ENCODE measurements at regions of chr17 and their contacts with region 1.

Region 1: GRCh38 chr17:75779231-75779986 is 5.2 kb upstream of the UNK start:
- DNase-seq: peak; percentile 100
- ATAC-seq: peak; percentile 75
- H3K4me3 ChIP-seq: peak overlapping the region; percentile 74 to 84
- H3K27ac ChIP-seq: peak overlapping the region; percentile 97
- H3K4me1 ChIP-seq: peaks cover 38 to 79% of the 10 kb centered on the region in 2 experiments
- H3K27me3 ChIP-seq: no peaks in the 10 kb centered on the region
- CTCF ChIP-seq: no peak; a peak in 1 of 6 replicates
- POLR2A ChIP-seq: peak; percentile 100
- RAD21 ChIP-seq: no peak

Region 2: GRCh38 chr17:75535119-75535537 is 244.3 kb before region 1 on chr17:
- CTCF ChIA-PET with region 1: no interaction called
- POLR2A ChIA-PET with region 1: no interaction called
- RAD21 ChIA-PET with region 1: no interaction called
- intact Hi-C with region 1: no loop called
- DNase-seq: no peak
- ATAC-seq: no peak
- H3K4me3 ChIP-seq: no peak overlapping the region
- H3K27ac ChIP-seq: peak overlapping the region; percentile 4; the same call in 1 of the 2 replicates
- H3K4me1 ChIP-seq: peaks cover 32 to 56% of the 10 kb centered on the region in 2 experiments
- H3K27me3 ChIP-seq: no peaks in the 10 kb centered on the region
- CTCF ChIP-seq: no peak
- POLR2A ChIP-seq: no peak
- RAD21 ChIP-seq: no peak

Region 3: GRCh38 chr17:75645889-75646637 is 133.3 kb before region 1 on chr17:
- CTCF ChIA-PET with region 1: no interaction called
- POLR2A ChIA-PET with region 1: interaction called, 13 read pairs
- RAD21 ChIA-PET with region 1: no interaction called
- intact Hi-C with region 1: no loop called
- DNase-seq: peak; percentile 64
- ATAC-seq: peak; percentile 89
- H3K4me3 ChIP-seq: peak overlapping the region; percentile 8 to 55
- H3K27ac ChIP-seq: peak overlapping the region; percentile 77
- H3K4me1 ChIP-seq: peaks cover 34 to 60% of the 10 kb centered on the region in 2 experiments
- H3K27me3 ChIP-seq: no peaks in the 10 kb centered on the region
- CTCF ChIP-seq: no peak
- POLR2A ChIP-seq: no peak
- RAD21 ChIP-seq: no peak

Region 4: DNA sequence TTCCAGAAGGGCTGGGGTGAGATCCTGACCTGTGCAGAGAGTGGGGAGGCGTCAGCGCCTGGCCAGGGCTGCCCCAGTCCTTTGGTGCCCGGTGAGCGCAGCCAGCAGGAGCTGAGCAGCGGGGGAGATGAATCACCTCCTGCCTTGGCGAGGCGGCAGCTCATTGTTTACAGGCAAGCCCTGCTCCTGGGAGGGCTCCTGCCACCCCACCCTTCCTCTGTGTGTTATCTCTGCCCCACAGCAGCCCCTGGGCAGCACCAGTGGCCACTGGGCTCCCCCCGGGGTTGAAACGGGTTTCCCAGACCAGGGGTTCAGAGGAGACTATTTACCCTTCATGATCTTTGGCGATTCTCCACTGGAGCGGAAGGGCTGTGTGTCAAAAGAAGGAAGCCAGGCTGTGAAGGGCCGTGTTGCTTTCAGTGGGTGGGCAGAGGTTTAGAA is 72.3 kb before region 1 on chr17:
- CTCF ChIA-PET with region 1: interaction called, 3 read pairs
- POLR2A ChIA-PET with region 1: interaction called, 14 read pairs
- RAD21 ChIA-PET with region 1: no interaction called
- intact Hi-C with region 1: no loop called
- DNase-seq: peak; percentile 94
- ATAC-seq: peak; percentile 95
- H3K4me3 ChIP-seq: peak overlapping the region in 1 of 2 experiments; percentile 43; a peak in 2 of 4 replicates
- H3K27ac ChIP-seq: peak overlapping the region; percentile 85
- H3K4me1 ChIP-seq: peaks cover 55 to 86% of the 10 kb centered on the region in 2 experiments
- H3K27me3 ChIP-seq: no peaks in the 10 kb centered on the region
- CTCF ChIP-seq: no peak
- POLR2A ChIP-seq: no peak
- RAD21 ChIP-seq: no peak

Region 5: GRCh38 chr17:75795820-75796607 is 16.6 kb after region 1 on chr17:
- CTCF ChIA-PET with region 1: interaction called, 6 read pairs
- POLR2A ChIA-PET with region 1: interaction called, 23 read pairs
- RAD21 ChIA-PET with region 1: no interaction called
- intact Hi-C with region 1: no loop called
- DNase-seq: no peak
- ATAC-seq: no peak
- H3K4me3 ChIP-seq: no peak overlapping the region
- H3K27ac ChIP-seq: no peak overlapping the region
- H3K4me1 ChIP-seq: no peaks in the 10 kb centered on the region
- H3K27me3 ChIP-seq: no peaks in the 10 kb centered on the region
- CTCF ChIP-seq: no peak
- POLR2A ChIP-seq: no peak
- RAD21 ChIP-seq: no peak

Region 6: GRCh38 chr17:75827252-75828115 is 48.1 kb after region 1 on chr17:
- CTCF ChIA-PET with region 1: interaction called, 6 read pairs
- POLR2A ChIA-PET with region 1: interaction called, 32 read pairs
- RAD21 ChIA-PET with region 1: interaction called in 1 of 2 experiments, 3 read pairs
- intact Hi-C with region 1: no loop called
- DNase-seq: no peak
- ATAC-seq: peak; percentile 84
- H3K4me3 ChIP-seq: no peak overlapping the region
- H3K27ac ChIP-seq: peak overlapping the region; percentile 27; the same call in 1 of the 2 replicates
- H3K4me1 ChIP-seq: peaks cover 6 to 8% of the 10 kb centered on the region in 2 experiments; a peak in 2 of 4 replicates
- H3K27me3 ChIP-seq: no peaks in the 10 kb centered on the region
- CTCF ChIP-seq: peak; percentile 70 to 91 (median 87)
- POLR2A ChIP-seq: no peak
- RAD21 ChIP-seq: peak; percentile 57

Region 7: DNA sequence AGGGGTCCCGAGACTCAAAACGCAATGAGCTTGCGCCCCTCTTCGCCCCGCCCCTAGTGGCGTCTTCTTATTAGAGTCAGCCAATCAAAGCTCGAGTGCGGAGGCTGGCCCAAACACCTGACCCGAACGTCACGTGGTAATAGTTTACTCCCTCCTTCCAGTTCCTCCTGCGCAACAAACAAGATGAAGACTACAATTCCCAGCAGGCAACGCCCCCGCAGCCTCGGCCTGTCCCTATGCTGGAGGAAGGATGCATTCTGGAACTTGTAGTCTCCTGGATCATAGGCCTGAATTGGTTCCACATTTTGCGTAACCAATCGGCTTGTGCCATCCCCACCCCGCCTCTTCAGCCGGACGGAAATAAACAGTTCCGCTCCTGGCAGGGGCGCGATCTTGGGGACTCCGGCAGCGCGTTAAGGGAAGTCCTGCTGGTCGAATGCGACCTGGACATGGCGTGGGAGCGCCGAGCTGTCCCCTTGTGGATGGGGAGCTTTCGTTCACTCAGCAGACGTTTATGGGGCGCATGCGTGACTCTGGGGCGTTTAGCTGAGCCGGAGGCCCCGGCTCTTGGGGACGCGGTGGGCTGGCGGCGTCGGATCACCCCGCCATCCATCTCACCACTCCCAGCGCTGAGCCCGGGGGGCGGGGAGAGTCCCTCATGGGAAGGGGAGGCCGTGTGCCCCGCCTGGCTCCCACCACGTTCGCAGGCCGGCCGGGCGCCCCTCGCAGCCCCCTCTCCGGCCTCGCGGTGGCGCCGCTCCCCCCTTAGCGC is 76.1 kb after region 1 on chr17 and contains the start of gene WBP2:
- CTCF ChIA-PET with region 1: interaction called, 20 read pairs
- POLR2A ChIA-PET with region 1: interaction called, 83 read pairs
- RAD21 ChIA-PET with region 1: interaction called in 1 of 2 experiments, 3 read pairs
- intact Hi-C with region 1: loop called (anchors 2 kb)
- DNase-seq: peak; percentile 100
- ATAC-seq: peak; percentile 91
- H3K4me3 ChIP-seq: peak within 1 kb of the TSS; percentile 75 to 86
- H3K27ac ChIP-seq: peak within 1 kb of the TSS; percentile 87
- H3K4me1 ChIP-seq: peaks cover 23 to 40% of the 10 kb centered on the region in 2 experiments
- H3K27me3 ChIP-seq: no peaks in the 10 kb centered on the region
- CTCF ChIP-seq: peak in 2 of 3 experiments; percentile 54 to 62; a peak in 4 of 6 replicates
- POLR2A ChIP-seq: peak; percentile 85
- RAD21 ChIP-seq: peak; percentile 58
- total RNA-seq, gene WBP2: 132 TPM

Region 8: DNA sequence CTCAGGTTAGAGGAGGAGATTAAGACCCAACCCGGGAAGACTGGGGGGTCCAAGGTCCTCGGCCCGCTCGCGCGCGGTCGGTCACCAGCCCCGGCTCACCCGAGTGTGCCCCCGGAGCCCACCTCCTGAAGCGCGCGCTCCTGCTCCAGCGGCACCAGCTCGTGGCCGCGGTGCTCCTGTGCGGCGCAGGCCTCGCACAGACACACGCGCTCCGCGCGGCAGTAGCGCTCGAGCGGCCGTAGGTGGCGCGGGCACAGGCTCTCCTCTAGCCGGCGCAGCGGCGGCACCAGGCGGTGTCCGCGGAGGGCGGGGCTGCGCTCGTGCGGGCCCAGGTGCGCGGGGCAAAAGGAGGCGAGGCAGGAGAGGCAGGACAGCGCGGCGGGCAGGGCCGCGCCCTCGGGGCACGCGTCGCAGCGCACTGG is 98.4 kb after region 1 on chr17:
- CTCF ChIA-PET with region 1: interaction called, 8 read pairs
- POLR2A ChIA-PET with region 1: interaction called, 27 read pairs
- RAD21 ChIA-PET with region 1: no interaction called
- intact Hi-C with region 1: loop called (anchors 5 kb)
- DNase-seq: no peak
- ATAC-seq: peak; percentile 49
- H3K4me3 ChIP-seq: peak overlapping the region; percentile 69 to 81
- H3K27ac ChIP-seq: peak overlapping the region; percentile 99
- H3K4me1 ChIP-seq: peaks cover 44 to 62% of the 10 kb centered on the region in 2 experiments
- H3K27me3 ChIP-seq: no peaks in the 10 kb centered on the region
- CTCF ChIP-seq: peak in 2 of 3 experiments; percentile 37 to 49; a peak in 3 of 6 replicates
- POLR2A ChIP-seq: peak; percentile 13
- RAD21 ChIP-seq: no peak

Region 9: GRCh38 chr17:76063875-76064546 is 284.6 kb after region 1 on chr17:
- CTCF ChIA-PET with region 1: no interaction called
- POLR2A ChIA-PET with region 1: no interaction called
- RAD21 ChIA-PET with region 1: no interaction called
- intact Hi-C with region 1: no loop called
- DNase-seq: no peak
- ATAC-seq: no peak
- H3K4me3 ChIP-seq: no peak overlapping the region
- H3K27ac ChIP-seq: no peak overlapping the region; the same call in 1 of the 2 replicates
- H3K4me1 ChIP-seq: no peaks in the 10 kb centered on the region
- H3K27me3 ChIP-seq: no peaks in the 10 kb centered on the region
- CTCF ChIP-seq: no peak
- POLR2A ChIP-seq: no peak
- RAD21 ChIP-seq: no peak

Region 10: GRCh38 chr17:76252040-76252954 is 472.9 kb after region 1 on chr17:
- CTCF ChIA-PET with region 1: no interaction called
- POLR2A ChIA-PET with region 1: no interaction called
- RAD21 ChIA-PET with region 1: no interaction called
- intact Hi-C with region 1: no loop called
- DNase-seq: no peak
- ATAC-seq: peak; percentile 22; the same call in 1 of the 2 replicates
- H3K4me3 ChIP-seq: no peak overlapping the region
- H3K27ac ChIP-seq: no peak overlapping the region
- H3K4me1 ChIP-seq: peaks cover 0 to 15% of the 10 kb centered on the region in 2 experiments; a peak in 2 of 4 replicates
- H3K27me3 ChIP-seq: no peaks in the 10 kb centered on the region
- CTCF ChIP-seq: no peak
- POLR2A ChIP-seq: no peak
- RAD21 ChIP-seq: no peak